Posterior vena cava (tissue), 2 donors: ENCODE measurements at regions of chr3 and their contacts with region 1.

Region 1: GRCh38 chr3:23739536-23739935 is 66.2 kb upstream of the UBE2E1 start:
- DNase-seq: no peak

Region 2: GRCh38 chr3:23567917-23568316 is 171.6 kb before region 1 on chr3:
- intact Hi-C with region 1: no loop called
- DNase-seq: no peak

Region 3: GRCh38 chr3:23685484-23686258 is 53.9 kb before region 1 on chr3:
- intact Hi-C with region 1: loop called in 1 of 2 experiments (anchors 2 kb)
- DNase-seq: peak; percentile 92

Region 4: GRCh38 chr3:23701716-23702559 is 37.6 kb before region 1 on chr3:
- intact Hi-C with region 1: no loop called
- DNase-seq: no peak

Region 5: DNA sequence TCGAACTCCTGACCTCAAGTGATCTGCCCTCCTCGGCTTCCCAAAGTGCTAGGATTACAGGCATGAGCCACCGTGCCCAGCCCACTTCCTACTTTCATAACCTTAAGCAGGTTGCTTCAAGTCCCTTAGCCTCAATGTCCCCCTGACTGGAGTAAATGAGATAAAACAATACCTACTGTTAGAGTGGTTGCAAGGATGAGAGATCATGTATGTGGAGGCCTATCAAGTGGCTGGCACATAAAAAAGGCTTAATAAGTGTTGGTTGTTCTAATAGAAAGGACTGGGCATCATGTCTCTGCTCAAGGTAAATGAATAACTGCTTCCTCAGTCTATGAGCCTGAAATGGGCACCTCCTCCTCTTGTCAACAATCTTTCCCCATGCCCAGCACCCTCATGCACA is 40.3 kb after region 1 on chr3:
- intact Hi-C with region 1: loop called in 1 of 2 experiments (anchors 1 kb)
- DNase-seq: no peak

Region 6: GRCh38 chr3:24389108-24390090 is 649.9 kb after region 1 on chr3:
- intact Hi-C with region 1: loop called in 1 of 2 experiments (anchors 10 kb)
- DNase-seq: no peak